GM10248 (cell line): ENCODE measurements at regions of chr3 and their contacts with region 1.

Region 1: GRCh38 chr3:157136647-157137387 is 23.1 kb downstream of the CCNL1 start:
- DNase-seq: no peak
- CTCF ChIP-seq: no peak

Region 2: DNA sequence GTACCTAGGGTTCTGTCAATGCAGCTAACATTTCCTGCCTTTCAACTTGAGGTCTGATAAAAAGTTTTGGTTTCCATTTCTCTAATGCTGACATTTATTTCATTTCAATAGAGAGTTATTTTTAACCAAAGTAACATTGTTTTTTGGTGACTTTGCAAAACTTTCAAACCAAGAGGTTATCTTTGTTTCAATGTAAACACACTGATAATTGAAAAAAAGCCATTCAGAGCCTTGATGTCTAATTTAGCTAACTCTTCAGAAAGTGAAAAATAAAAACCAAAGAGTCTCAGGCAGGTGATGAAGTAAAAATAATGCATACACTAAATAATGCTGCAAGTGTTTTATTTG is 472.0 kb before region 1 on chr3:
- CTCF ChIA-PET with region 1: interaction called, 58 read pairs
- POLR2A ChIA-PET with region 1: no interaction called
- DNase-seq: peak; percentile 44
- CTCF ChIP-seq: no peak

Region 3: DNA sequence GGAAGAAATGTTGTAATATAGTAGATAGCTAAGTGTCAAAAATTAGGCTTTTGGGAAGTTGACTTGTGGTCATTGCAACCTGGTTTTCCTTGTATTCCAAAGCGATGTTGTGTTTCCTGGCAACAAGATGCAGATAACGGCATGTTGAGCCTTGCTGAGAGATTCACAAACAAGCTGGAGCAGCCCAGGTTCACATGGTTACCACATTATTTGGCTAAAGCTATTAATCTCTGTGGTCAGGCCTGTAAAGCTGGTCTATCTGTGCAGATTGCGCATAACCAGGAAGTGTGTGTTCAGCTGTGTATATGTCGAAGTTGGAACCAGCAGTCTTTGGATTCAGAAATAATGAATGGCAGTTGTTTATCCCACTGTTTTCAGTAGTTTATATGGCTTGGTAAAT is 455.8 kb before region 1 on chr3:
- CTCF ChIA-PET with region 1: interaction called, 58 read pairs
- POLR2A ChIA-PET with region 1: no interaction called
- DNase-seq: no peak
- CTCF ChIP-seq: no peak

Region 4: GRCh38 chr3:157064402-157064801 is 72.4 kb before region 1 on chr3:
- CTCF ChIA-PET with region 1: interaction called, 1,428 read pairs
- POLR2A ChIA-PET with region 1: no interaction called
- DNase-seq: no peak
- CTCF ChIP-seq: no peak

Region 5: GRCh38 chr3:157159762-157160657 is 23.2 kb after region 1 on chr3 and contains the start of gene CCNL1:
- CTCF ChIA-PET with region 1: interaction called, 14 read pairs
- POLR2A ChIA-PET with region 1: no interaction called
- DNase-seq: peak; percentile 92
- CTCF ChIP-seq: no peak

Region 6: GRCh38 chr3:157259825-157260224 is 123.0 kb after region 1 on chr3:
- CTCF ChIA-PET with region 1: no interaction called
- POLR2A ChIA-PET with region 1: no interaction called
- DNase-seq: no peak
- CTCF ChIP-seq: no peak

Region 7: DNA sequence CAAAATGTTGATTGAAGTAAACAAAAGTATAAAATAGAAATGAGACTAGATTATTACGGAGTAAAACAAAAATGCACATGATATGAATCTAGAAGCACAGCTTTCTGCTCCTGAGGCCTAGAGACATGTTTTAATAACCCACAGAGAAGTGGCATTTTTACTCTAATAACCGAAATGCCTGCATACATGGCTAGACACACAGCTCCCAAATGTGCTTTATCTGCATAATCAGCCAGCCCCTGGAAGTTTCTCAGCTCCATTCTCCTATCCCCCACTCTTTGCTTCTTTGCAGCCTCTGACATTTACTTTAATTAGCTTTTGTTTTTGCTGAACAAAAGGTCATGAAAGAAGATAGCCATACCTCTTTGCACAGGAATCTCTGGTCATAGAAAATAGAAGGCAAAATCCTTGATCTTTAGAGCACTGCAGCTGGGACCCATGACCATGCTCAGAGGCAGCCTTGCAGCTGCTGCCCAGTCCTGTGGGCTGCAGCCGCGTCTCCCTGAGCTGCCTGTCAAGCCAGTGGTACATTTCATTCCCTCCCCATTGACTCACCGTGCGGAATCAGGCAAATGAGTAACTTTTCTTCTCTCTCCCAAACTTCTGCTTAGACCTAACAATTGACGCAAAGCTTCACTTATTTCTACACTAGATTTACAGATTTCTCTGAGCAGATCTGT is 366.2 kb after region 1 on chr3 and contains the start of gene VEPH1:
- CTCF ChIA-PET with region 1: no interaction called
- POLR2A ChIA-PET with region 1: no interaction called
- DNase-seq: no peak
- CTCF ChIP-seq: no peak

Region 8: GRCh38 chr3:157785102-157785826 is 648.4 kb after region 1 on chr3:
- CTCF ChIA-PET with region 1: no interaction called
- POLR2A ChIA-PET with region 1: no interaction called
- DNase-seq: no peak
- CTCF ChIP-seq: no peak